ENCODE measurements at regions of chr1 and their contacts with region 1.

Region 1: GRCh38 chr1:43238085-43238484 is 31.7 kb upstream of the TMEM125 start:
- DNase-seq: peak; percentile 70
- H3K4me3 Mint-ChIP-seq: no peak overlapping the region
- H3K27ac Mint-ChIP-seq: no peak overlapping the region
- H3K4me1 Mint-ChIP-seq: peaks cover 13% of the 10 kb centered on the region
- H3K27me3 Mint-ChIP-seq: peaks cover 11% of the 10 kb centered on the region

Region 2: GRCh38 chr1:43134068-43134467 is 104.0 kb before region 1 on chr1:
- CTCF ChIA-PET with region 1: no interaction called
- DNase-seq: no peak
- H3K4me3 Mint-ChIP-seq: no peak overlapping the region
- H3K27ac Mint-ChIP-seq: no peak overlapping the region
- H3K4me1 Mint-ChIP-seq: no peaks in the 10 kb centered on the region
- H3K27me3 Mint-ChIP-seq: peaks cover 30% of the 10 kb centered on the region

Region 3: DNA sequence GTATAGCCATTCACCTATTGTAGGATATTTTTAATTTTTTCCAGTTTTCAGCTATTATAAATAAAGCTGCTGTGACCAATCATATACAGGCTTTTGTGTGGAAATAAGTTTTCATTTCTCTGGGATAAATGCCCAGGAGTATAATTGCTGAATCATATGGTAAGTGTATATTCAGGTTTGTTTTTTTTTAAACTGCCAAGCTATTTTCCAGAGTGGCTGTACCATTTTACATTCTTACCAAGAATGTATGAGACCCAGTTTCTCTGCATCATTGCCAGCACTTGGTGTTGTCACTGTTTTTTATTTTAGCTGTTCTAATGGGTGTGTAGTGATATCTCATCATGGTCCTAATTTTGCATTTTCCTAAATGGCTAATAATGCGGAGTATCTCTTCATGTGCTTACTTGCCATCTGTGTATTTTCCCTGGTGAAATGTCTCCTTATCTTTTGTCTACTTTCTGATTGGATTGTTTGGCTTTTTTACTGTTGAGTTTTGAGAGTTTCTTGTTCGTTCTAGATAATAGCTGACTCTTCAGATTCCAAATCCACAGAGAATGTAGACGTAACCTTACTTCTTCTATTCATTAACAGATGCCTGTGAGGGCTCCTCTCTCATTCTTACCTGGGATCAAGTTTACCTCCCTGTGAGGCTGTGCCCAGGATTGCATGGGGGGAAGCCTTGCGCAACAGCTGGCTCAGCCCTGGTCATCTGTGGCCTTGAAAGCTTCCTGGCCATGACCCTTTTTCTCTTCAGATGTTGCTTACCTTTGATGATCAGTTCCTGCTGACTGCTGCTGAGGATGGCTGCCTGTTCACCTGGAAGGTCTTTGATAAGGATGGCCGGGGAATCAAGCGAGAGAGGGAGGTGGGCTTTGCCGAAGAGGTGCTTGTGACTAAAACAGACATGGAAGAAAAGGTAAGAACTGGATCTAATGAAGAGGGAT is 23.3 kb before region 1 on chr1:
- CTCF ChIA-PET with region 1: no interaction called
- DNase-seq: no peak
- H3K4me3 Mint-ChIP-seq: no peak overlapping the region
- H3K27ac Mint-ChIP-seq: no peak overlapping the region
- H3K4me1 Mint-ChIP-seq: no peaks in the 10 kb centered on the region
- H3K27me3 Mint-ChIP-seq: peaks cover 16% of the 10 kb centered on the region

Region 4: GRCh38 chr1:43227143-43227764 is 10.8 kb before region 1 on chr1:
- CTCF ChIA-PET with region 1: interaction called, 27 read pairs
- DNase-seq: peak; percentile 90
- H3K4me3 Mint-ChIP-seq: no peak overlapping the region
- H3K27ac Mint-ChIP-seq: no peak overlapping the region
- H3K4me1 Mint-ChIP-seq: no peaks in the 10 kb centered on the region
- H3K27me3 Mint-ChIP-seq: peaks cover 46% of the 10 kb centered on the region

Region 5: GRCh38 chr1:43358746-43359693 is 120.9 kb after region 1 on chr1 and contains the start of gene CDC20:
- CTCF ChIA-PET with region 1: interaction called, 16 read pairs
- DNase-seq: peak; percentile 99
- H3K4me3 Mint-ChIP-seq: peak within 1 kb of the TSS; percentile 95
- H3K27ac Mint-ChIP-seq: peak within 1 kb of the TSS; percentile 85
- H3K4me1 Mint-ChIP-seq: peaks cover 48% of the 10 kb centered on the region
- H3K27me3 Mint-ChIP-seq: no peaks in the 10 kb centered on the region

Region 6: DNA sequence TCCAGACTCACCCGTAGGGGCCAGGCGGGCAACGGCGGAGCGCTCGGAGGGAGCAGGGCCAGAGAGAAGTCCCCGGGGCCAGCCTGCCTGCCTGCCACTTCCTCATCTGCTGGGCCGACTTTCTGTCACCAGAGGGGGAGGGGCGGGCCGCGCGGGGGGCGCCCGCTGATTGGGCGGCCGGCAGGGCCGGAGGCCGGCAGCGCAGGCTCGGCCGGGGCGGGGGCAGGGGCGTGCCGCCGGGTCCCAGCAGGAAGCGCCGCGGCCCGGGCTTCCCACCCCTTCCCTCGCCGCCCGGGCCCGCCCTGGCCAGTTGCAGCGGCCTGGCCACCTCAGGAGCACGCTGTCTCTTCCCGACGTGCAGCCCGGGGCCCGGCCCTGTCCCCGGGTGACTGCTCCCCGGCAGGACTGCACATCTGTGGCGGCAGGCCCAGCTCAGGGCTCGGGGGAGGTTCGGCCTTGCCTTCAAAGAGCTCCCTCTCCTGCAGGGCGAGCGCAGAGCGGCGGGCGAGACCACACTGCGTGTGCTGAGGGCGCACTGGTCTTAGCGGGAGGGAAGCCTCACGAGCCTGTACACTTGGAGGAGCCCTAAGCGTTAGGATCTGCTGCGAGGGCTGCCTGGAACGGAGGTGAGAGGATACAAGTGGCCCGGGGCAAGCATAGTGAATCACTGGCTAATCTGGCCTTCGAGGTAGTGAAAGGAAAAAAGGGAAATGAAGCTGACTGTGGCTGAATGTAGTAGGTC is 130.0 kb after region 1 on chr1 and contains the start of gene ELOVL1:
- CTCF ChIA-PET with region 1: interaction called, 10 read pairs
- DNase-seq: peak; percentile 93
- H3K4me3 Mint-ChIP-seq: peak within 1 kb of the TSS; percentile 83
- H3K27ac Mint-ChIP-seq: peak within 1 kb of the TSS; percentile 93
- H3K4me1 Mint-ChIP-seq: peaks cover 50% of the 10 kb centered on the region
- H3K27me3 Mint-ChIP-seq: no peaks in the 10 kb centered on the region

Region 7: DNA sequence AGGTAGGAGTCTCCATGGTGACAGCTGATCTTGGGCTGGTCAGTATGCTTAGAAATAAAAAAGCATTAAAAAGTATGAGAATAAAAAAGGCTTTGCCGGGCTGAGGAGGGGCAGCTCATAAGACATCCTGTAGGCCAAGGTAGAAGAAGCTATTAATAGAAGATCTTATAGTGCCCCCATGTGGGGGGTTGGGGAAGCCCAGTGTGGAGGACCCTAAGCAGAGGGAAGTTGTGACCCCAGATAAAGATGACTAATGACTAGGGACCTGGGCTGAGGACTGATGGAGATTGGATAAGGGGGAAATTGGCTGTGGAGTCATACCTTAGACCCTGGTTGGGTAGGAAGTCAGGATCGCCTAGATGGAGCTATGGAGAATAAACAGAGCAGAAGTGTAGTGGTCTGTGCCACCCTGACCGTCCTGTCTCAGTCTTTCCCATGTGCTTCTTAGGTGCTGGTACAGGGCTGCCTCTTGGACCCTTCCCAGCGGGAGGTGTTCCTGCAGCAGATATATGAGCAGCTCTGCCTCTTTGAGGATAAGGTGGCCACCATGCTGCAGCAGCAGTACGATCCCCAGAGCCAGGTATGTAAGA is 176.6 kb after region 1 on chr1:
- CTCF ChIA-PET with region 1: interaction called, 57 read pairs
- DNase-seq: peak; percentile 73
- H3K4me3 Mint-ChIP-seq: no peak overlapping the region
- H3K27ac Mint-ChIP-seq: peak overlapping the region; percentile 44
- H3K4me1 Mint-ChIP-seq: no peaks in the 10 kb centered on the region
- H3K27me3 Mint-ChIP-seq: no peaks in the 10 kb centered on the region